ENCODE measurements at regions of chr5 and their contacts with region 1.

Region 1: GRCh38 chr5:181159286-181159829 is 12.0 kb downstream of the OR2V2 start:
- DNase-seq: peak; percentile 89
- ATAC-seq: peak; percentile 76
- H3K4me3 ChIP-seq: no peak overlapping the region
- H3K4me3 Mint-ChIP-seq: peak overlapping the region; percentile 70
- H3K27ac ChIP-seq: no peak overlapping the region
- H3K27ac Mint-ChIP-seq: peak overlapping the region; percentile 80
- H3K4me1 ChIP-seq: peaks cover 17 to 28% of the 10 kb centered on the region in 2 donors
- H3K4me1 Mint-ChIP-seq: peaks cover 25% of the 10 kb centered on the region
- H3K27me3 ChIP-seq: peaks cover 0 to 33% (median 2%) of the 10 kb centered on the region in 4 experiments
- H3K27me3 Mint-ChIP-seq: peaks cover 9% of the 10 kb centered on the region
- CTCF ChIP-seq: peak; percentile 96

Region 2: DNA sequence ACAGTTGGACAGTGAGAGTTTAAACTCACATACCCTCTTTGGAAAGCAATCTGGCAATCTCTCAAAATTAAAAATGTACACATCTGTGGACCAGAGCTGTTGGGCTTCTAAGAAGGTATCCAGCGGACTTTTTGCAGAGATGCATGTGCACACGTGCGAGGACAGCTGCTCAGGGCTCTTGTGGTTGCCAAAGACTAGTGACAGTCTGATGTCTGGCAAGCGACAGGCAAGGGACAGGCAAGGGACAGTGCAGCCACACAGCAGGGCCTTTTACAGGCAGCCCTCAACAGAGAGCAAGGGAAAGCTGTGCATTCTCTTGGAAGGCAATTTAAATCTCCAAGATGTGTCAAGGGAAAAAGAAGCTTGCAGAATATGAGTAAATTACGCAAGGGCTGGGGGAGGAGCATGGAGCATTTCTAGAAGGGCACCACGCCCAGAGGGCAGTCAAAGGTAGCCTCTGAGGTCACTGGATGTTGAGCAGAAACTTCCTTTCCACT is 815.5 kb before region 1 on chr5:
- CTCF ChIA-PET with region 1: no interaction called
- POLR2A ChIA-PET with region 1: no interaction called
- intact Hi-C with region 1: no loop called
- DNase-seq: no peak
- ATAC-seq: no peak
- H3K4me3 ChIP-seq: no peak overlapping the region
- H3K4me3 Mint-ChIP-seq: no peak overlapping the region
- H3K27ac ChIP-seq: no peak overlapping the region
- H3K27ac Mint-ChIP-seq: no peak overlapping the region
- H3K4me1 ChIP-seq: no peaks in the 10 kb centered on the region
- H3K4me1 Mint-ChIP-seq: no peaks in the 10 kb centered on the region
- H3K27me3 ChIP-seq: no peaks in the 10 kb centered on the region
- H3K27me3 Mint-ChIP-seq: peaks cover 29% of the 10 kb centered on the region
- CTCF ChIP-seq: no peak

Region 3: GRCh38 chr5:180784497-180785097 is 374.8 kb before region 1 on chr5:
- CTCF ChIA-PET with region 1: interaction called, 7 read pairs
- POLR2A ChIA-PET with region 1: no interaction called
- intact Hi-C with region 1: loop called (anchors 1 kb)
- DNase-seq: peak; percentile 80
- ATAC-seq: peak; percentile 92
- H3K4me3 ChIP-seq: no peak overlapping the region
- H3K4me3 Mint-ChIP-seq: no peak overlapping the region
- H3K27ac ChIP-seq: no peak overlapping the region
- H3K27ac Mint-ChIP-seq: no peak overlapping the region
- H3K4me1 ChIP-seq: no peaks in the 10 kb centered on the region
- H3K4me1 Mint-ChIP-seq: peaks cover 12% of the 10 kb centered on the region
- H3K27me3 ChIP-seq: no peaks in the 10 kb centered on the region
- H3K27me3 Mint-ChIP-seq: no peaks in the 10 kb centered on the region
- CTCF ChIP-seq: peak; percentile 79

Region 4: DNA sequence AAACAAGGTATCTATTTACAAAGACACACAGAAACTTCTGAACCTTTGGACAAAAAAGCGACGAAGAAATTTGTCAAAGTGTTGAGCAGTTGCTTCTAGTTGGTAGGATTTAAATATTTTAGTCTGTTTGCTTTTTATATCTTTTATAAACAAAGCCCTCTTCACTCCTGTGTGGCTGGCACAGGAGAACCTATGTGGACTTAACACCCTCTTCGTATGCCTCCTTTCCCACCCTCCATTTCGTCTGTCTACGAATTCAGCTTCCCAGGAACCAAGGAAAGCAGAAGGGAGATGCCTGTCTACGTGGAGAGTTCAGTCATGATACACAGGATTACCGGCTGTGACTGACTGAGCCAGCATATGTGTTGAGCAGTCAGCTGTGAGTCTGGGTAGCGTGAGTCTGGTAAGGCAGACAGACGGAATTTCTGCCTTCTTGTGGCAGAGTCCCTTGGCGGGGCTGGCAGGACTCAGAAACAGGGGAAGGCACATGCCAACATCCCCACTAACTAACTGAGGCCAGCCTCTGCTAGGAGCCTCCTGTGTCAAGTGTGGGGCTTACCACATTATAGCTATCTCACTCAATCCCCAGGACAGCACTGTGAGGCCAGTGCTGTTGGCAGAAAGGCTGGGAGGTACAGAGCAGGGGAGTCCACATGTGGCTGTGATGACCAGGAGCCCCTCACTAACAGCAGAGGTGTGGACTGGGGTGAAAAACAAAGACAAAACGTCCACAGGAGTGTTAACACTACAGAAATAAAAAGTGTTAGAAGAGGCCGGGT is 284.4 kb before region 1 on chr5:
- CTCF ChIA-PET with region 1: no interaction called
- POLR2A ChIA-PET with region 1: no interaction called
- intact Hi-C with region 1: no loop called
- DNase-seq: no peak
- ATAC-seq: no peak
- H3K4me3 ChIP-seq: no peak overlapping the region
- H3K4me3 Mint-ChIP-seq: no peak overlapping the region
- H3K27ac ChIP-seq: no peak overlapping the region
- H3K27ac Mint-ChIP-seq: no peak overlapping the region
- H3K4me1 ChIP-seq: no peaks in the 10 kb centered on the region
- H3K4me1 Mint-ChIP-seq: peaks cover 2% of the 10 kb centered on the region
- H3K27me3 ChIP-seq: peaks cover 0 to 4% (median 0%) of the 10 kb centered on the region in 4 experiments
- H3K27me3 Mint-ChIP-seq: peaks cover 5% of the 10 kb centered on the region
- CTCF ChIP-seq: no peak

Region 5: DNA sequence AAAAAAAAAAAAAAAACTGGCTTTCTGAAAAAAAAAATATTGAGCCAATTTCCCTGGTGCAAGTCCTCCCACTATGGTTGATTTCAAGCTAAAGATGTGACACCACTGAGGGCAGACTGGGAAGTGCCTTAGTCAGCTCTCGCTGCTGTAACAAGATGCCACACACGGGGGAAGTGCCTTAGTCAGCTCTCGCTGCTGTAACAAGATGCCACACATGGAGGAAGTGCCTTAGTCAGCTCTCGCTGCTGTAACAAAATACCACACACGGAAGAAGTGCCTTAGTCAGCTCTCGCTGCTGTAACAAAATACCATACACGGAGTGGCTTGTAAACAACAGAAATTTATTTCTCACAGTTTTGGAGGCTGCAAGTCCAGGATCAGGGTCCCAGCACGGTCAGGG is 95.8 kb before region 1 on chr5:
- CTCF ChIA-PET with region 1: no interaction called
- POLR2A ChIA-PET with region 1: no interaction called
- intact Hi-C with region 1: no loop called
- DNase-seq: no peak
- ATAC-seq: no peak
- H3K4me3 ChIP-seq: no peak overlapping the region
- H3K4me3 Mint-ChIP-seq: no peak overlapping the region
- H3K27ac ChIP-seq: no peak overlapping the region
- H3K27ac Mint-ChIP-seq: no peak overlapping the region
- H3K4me1 ChIP-seq: peaks cover 0 to 3% of the 10 kb centered on the region in 2 donors
- H3K4me1 Mint-ChIP-seq: peaks cover 8% of the 10 kb centered on the region
- H3K27me3 ChIP-seq: peaks cover 0 to 44% (median 27%) of the 10 kb centered on the region in 4 experiments
- H3K27me3 Mint-ChIP-seq: peaks cover 51% of the 10 kb centered on the region
- CTCF ChIP-seq: no peak

Region 6: GRCh38 chr5:181100121-181101015 is 59.0 kb before region 1 on chr5:
- CTCF ChIA-PET with region 1: no interaction called
- POLR2A ChIA-PET with region 1: no interaction called
- intact Hi-C with region 1: loop called (anchors 10 kb)
- DNase-seq: peak; percentile 37
- ATAC-seq: no peak
- H3K4me3 ChIP-seq: no peak overlapping the region
- H3K4me3 Mint-ChIP-seq: peak overlapping the region; percentile 53
- H3K27ac ChIP-seq: no peak overlapping the region
- H3K27ac Mint-ChIP-seq: peak overlapping the region; percentile 46
- H3K4me1 ChIP-seq: peaks cover 2 to 5% of the 10 kb centered on the region in 2 donors
- H3K4me1 Mint-ChIP-seq: peaks cover 21% of the 10 kb centered on the region
- H3K27me3 ChIP-seq: peaks cover 0 to 31% (median 13%) of the 10 kb centered on the region in 4 experiments
- H3K27me3 Mint-ChIP-seq: peaks cover 24% of the 10 kb centered on the region
- CTCF ChIP-seq: no peak

Region 7: GRCh38 chr5:181181650-181182565 is 22.6 kb after region 1 on chr5:
- CTCF ChIA-PET with region 1: interaction called, 6 read pairs
- POLR2A ChIA-PET with region 1: no interaction called
- intact Hi-C with region 1: loop called (anchors 1 kb)
- DNase-seq: peak; percentile 85
- ATAC-seq: peak; percentile 74
- H3K4me3 ChIP-seq: no peak overlapping the region
- H3K4me3 Mint-ChIP-seq: peak overlapping the region; percentile 71
- H3K27ac ChIP-seq: no peak overlapping the region
- H3K27ac Mint-ChIP-seq: peak overlapping the region; percentile 70
- H3K4me1 ChIP-seq: peaks cover 8 to 33% of the 10 kb centered on the region in 2 donors
- H3K4me1 Mint-ChIP-seq: peaks cover 31% of the 10 kb centered on the region
- H3K27me3 ChIP-seq: no peaks in the 10 kb centered on the region
- H3K27me3 Mint-ChIP-seq: no peaks in the 10 kb centered on the region
- CTCF ChIP-seq: peak; percentile 81

Region 8: DNA sequence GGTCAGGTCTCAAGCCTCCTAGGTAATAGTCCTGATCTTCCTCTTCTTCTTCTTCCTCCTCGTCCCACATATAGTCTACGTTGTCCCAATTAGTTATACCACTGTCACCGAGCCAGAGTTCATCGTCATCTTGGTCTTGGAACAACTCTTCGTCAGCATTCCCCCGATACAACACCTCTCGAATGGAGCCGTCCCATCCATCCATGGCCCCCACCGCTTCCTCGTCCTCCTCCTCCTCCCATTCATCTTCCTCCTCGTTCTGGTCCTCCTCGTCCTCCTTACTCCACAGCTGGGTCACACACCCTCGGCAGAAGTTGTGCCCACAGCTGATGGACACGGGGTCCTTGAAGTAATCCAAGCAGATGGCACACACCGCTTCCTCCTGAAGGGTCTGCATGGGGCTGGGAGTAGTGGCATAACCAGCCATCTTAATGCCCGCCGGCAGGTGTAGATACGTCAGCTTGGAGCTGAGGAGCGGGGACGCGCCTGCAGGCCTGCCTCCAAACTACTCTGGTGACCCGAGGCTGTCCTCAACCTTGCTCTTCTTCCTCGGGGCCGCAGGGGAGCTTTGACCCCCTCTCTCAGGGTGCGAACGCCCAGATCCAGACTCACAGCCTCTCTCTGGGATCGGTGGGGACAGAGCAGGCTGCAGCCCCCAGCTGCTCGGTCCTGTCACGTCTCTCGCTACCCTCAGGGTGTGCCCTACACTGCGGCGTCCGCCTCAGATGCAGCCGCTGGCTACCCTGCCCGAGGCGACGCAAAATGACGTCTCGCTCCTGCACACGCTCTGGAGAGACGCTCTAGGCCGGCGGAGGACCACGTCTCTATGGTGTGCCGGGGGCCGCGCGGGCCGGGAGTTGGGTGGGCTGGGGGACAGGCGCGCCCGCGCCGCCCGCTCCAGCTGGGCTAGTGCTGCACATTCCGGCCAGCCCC is 101.3 kb after region 1 on chr5 and contains the start of gene TRIM52:
- CTCF ChIA-PET with region 1: interaction called, 3 read pairs
- POLR2A ChIA-PET with region 1: no interaction called
- intact Hi-C with region 1: loop called (anchors 5 kb)
- DNase-seq: peak; percentile 94
- ATAC-seq: peak; percentile 79
- H3K4me3 ChIP-seq: peak within 1 kb of the TSS; percentile 67 to 99 (median 98)
- H3K4me3 Mint-ChIP-seq: peak within 1 kb of the TSS; percentile 95
- H3K27ac ChIP-seq: peak within 1 kb of the TSS; percentile 98
- H3K27ac Mint-ChIP-seq: peak within 1 kb of the TSS; percentile 97
- H3K4me1 ChIP-seq: peaks cover 22 to 38% of the 10 kb centered on the region in 2 donors
- H3K4me1 Mint-ChIP-seq: peaks cover 53% of the 10 kb centered on the region
- H3K27me3 ChIP-seq: no peaks in the 10 kb centered on the region
- H3K27me3 Mint-ChIP-seq: no peaks in the 10 kb centered on the region
- CTCF ChIP-seq: peak; percentile 17
- total RNA-seq, gene TRIM52: 58.6 and 61.3 TPM in 2 replicates